ENCODE measurements at regions of chr21 and their contacts with region 1.

Region 1: DNA sequence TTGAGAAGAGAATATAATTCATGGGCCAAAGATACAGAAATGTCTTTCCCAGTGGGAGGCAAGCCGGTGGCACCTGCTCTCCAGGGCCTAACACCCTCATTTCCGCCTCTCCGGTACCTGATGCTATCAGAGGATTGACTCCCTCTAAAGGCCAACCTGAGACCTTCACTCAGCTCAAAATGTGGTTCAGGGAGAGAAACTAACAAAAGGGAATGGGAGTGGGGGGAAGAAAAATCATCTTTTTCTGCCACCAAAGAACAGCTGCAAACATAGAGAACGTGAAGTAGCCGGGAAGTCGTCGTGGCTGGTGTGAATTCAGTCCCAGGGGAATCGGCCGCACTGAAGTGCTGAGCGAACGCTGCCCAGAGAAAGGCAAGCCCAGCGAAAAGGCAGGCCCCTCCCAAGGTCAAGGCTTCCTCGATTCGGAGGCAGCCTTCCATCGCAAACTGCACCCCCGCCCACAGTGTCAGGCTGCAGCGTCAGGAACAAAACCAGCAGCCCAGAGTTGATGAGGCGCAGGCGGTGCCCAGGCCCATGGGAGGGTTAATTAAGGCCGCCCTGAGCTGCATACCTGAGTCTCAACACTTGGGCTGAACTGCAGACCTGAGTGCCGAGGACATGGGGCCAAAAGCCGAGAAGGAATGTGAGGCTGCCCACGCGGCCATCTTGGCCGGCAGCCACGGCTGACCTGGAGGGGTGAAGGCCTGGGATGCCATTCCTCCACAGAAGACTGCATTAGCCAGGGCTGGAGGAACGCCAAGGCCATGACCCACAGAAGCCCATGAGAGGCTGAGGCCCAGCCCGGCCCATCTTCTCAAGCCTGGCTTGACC is 160.2 kb downstream of the PSMG1 start:
- DNase-seq: peak in 1 of 2 experiments; percentile 89
- H3K4me3 ChIP-seq: no peak overlapping the region
- H3K27ac ChIP-seq: no peak overlapping the region
- H3K4me1 ChIP-seq: peaks cover 22% of the 10 kb centered on the region
- H3K27me3 ChIP-seq: no peaks in the 10 kb centered on the region
- CTCF ChIP-seq: 0 out of 2 replicates have a peak, but pooled peaks have one; percentile 25

Region 2: GRCh38 chr21:38440746-38441145 is 582.3 kb before region 1 on chr21:
- CTCF ChIA-PET with region 1: no interaction called
- POLR2A ChIA-PET with region 1: no interaction called
- intact Hi-C with region 1: no loop called
- DNase-seq: peak in 1 of 2 experiments; percentile 1
- H3K4me3 ChIP-seq: no peak overlapping the region
- H3K27ac ChIP-seq: no peak overlapping the region
- H3K4me1 ChIP-seq: no peaks in the 10 kb centered on the region
- H3K27me3 ChIP-seq: 0 out of 2 replicates have a peak, but pooled peaks cover 10% of the 10 kb centered on the region
- CTCF ChIP-seq: no peak

Region 3: GRCh38 chr21:38913120-38913892 is 109.8 kb before region 1 on chr21:
- CTCF ChIA-PET with region 1: no interaction called
- POLR2A ChIA-PET with region 1: no interaction called
- intact Hi-C with region 1: loop called (anchors 1 kb)
- DNase-seq: peak; percentile 85 to 87
- H3K4me3 ChIP-seq: peak overlapping the region; percentile 48; the same call in 1 of the 2 replicates
- H3K27ac ChIP-seq: peak overlapping the region; percentile 77
- H3K4me1 ChIP-seq: peaks cover 48% of the 10 kb centered on the region
- H3K27me3 ChIP-seq: no peaks in the 10 kb centered on the region
- CTCF ChIP-seq: no peak

Region 4: GRCh38 chr21:39048064-39048463 is 25.0 kb after region 1 on chr21:
- CTCF ChIA-PET with region 1: interaction called, 16 read pairs
- POLR2A ChIA-PET with region 1: interaction called, 13 read pairs
- intact Hi-C with region 1: loop called (anchors 2 kb)
- DNase-seq: peak; percentile 86 to 90
- H3K4me3 ChIP-seq: no peak overlapping the region
- H3K27ac ChIP-seq: peak overlapping the region; percentile 44; the same call in 1 of the 2 replicates
- H3K4me1 ChIP-seq: 0 out of 2 replicates have a peak, but pooled peaks cover 15% of the 10 kb centered on the region
- H3K27me3 ChIP-seq: no peaks in the 10 kb centered on the region
- CTCF ChIP-seq: no peak

Region 5: DNA sequence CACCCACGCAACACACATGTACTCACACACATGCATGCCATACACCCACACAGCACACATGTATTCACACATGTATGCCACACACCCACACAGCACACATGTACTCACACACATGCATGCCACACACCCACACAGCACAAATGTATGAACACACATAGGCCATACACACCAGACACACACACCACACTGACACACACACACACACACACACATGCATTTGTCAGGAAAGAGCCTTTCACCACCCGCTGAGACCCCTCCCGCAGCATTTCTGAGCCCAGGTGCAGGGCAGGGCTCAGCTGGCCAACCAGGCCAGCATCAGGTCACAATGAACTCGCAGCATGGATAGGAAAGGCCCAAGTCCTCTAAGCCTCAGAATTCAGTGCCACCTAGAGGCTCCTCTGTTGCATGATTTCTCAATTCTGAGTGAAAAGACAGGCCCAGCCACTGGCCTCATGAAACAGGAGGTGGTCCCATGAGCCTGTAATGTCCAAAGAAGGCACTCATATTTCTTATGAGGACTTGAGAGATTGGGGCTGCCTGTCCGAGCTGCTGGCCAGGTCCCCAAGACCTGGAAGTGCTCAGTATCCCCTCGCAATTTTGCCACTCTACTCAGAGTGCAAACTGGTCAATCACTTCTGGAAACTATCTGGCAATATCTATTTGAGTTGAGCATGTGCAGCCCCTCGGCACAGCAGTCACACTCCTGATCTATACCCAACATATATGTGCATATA is 102.8 kb after region 1 on chr21:
- CTCF ChIA-PET with region 1: no interaction called
- POLR2A ChIA-PET with region 1: no interaction called
- intact Hi-C with region 1: loop called (anchors 5 kb)
- DNase-seq: peak; percentile 43 to 46
- H3K4me3 ChIP-seq: no peak overlapping the region
- H3K27ac ChIP-seq: no peak overlapping the region
- H3K4me1 ChIP-seq: no peaks in the 10 kb centered on the region
- H3K27me3 ChIP-seq: no peaks in the 10 kb centered on the region
- CTCF ChIP-seq: peak; percentile 63; the same call in 1 of the 2 replicates

Region 6: DNA sequence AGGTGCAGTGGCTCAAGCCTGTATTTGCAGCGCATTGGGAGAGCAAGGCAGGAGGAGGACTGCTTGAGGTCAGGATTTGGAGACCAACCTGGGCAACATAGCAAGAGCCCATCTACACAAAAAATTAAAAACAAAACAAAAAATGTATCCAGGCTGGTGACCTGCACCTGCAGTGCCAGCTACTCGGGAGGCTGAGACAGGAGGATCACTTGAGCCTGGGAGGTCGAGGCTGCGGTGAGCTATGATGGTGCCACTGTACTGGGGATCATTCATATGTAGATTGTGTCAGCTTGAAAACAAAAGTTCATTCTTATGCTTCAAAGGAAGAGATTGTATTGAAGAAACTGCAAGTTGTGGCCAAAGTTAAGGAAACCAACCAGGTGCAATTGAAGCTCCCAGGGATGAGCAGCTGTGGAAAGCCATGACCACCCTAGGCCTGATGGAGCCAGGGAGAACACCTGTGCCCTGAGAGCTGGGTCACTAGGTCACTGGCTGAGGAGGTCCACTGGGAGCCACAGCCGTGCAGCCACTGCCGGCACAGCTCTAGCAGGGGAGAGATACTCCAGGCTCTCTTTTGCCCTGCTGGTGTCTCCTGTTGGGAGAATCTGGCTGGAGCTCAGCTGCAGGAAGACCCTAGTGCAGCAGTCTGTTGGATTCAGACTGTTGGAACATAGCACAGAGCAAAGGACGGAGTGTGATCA is 303.7 kb after region 1 on chr21:
- CTCF ChIA-PET with region 1: no interaction called
- POLR2A ChIA-PET with region 1: no interaction called
- intact Hi-C with region 1: no loop called
- DNase-seq: no peak
- H3K4me3 ChIP-seq: no peak overlapping the region
- H3K27ac ChIP-seq: no peak overlapping the region
- H3K4me1 ChIP-seq: peaks cover 9% of the 10 kb centered on the region
- H3K27me3 ChIP-seq: no peaks in the 10 kb centered on the region
- CTCF ChIP-seq: no peak

Measured in PC-9 (cell line).